GM13977 (cell line): ENCODE measurements at regions of chr1 and their contacts with region 1.

Region 1: DNA sequence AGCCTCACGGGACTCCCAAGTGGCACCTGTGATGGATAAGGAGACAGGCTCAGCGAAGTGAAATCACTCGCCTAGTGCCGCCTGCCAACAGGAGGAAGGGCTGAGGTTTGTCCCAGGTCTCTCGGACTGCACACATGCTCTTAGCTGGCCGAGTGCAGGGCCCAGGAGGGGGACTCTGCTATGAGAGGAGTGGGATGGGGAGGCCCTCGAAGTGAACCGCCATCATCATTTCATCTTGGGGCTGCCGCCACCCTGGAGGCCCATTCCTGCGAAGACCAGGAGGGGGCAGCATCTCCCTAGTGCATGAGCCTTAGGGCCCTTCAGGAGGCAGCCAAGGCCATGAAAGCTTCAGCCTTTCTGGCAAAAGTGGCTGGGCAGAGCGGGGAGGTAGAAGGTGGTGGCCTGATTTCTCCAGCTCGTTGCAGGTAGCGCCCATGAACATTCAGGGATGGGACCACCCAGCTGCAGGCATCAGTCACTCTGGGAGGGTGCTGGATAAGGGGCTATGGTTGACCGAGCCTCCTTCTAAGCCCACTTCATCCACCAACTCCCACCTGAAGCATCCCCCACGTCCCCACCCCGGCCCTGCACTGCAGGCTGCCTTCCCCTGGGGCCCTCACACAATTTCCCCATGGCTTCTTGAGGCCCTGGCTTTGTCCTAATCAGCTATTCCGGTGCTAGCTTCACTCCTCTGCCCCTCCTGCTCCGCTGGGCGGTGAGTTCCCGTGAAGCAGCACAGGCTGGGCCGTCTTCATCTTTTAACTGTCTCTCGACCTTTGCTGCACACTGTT is 17.2 kb upstream of the RASSF5 start:
- DNase-seq: peak; percentile 79
- CTCF ChIP-seq: peak; percentile 91

Region 2: DNA sequence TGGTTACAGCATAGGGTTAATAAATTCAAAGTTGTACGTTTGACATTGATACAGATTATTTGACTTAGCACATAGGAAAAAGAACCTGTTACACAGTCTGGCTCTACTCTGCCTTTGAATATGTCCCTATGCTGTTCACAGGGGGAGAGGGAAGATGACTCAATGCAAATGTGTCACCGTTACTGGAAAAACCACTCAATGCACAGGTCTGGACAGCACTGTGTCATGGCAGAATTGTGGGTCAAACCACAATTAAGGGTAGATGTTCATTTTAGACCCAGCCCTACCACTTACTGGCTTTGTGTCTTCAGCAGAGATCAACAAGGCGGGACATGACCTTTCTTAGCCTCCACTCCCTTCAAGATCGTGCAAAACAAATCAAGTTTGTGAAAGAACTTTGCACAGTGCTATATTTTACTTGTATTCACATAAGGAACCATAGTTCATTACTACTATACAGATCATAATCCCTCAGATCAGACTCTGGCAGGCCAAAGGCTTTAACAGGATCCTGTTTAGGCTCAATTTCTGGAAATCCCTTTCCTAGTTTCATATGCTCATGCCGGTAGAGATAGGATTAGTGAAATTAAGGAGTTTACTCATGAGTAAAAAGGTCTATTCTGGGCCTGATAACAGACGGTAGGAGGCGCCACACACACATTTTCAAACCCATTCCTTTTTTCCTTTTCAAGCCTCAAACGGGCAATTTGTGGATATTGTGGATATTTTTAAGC is 100.0 kb after region 1 on chr1:
- in situ Hi-C with region 1: loop called (anchors 5 kb)
- DNase-seq: peak; percentile 69
- CTCF ChIP-seq: peak; percentile 37